HEK293 (cell line): ENCODE measurements at regions of chr18 and their contacts with region 1.

Region 1: DNA sequence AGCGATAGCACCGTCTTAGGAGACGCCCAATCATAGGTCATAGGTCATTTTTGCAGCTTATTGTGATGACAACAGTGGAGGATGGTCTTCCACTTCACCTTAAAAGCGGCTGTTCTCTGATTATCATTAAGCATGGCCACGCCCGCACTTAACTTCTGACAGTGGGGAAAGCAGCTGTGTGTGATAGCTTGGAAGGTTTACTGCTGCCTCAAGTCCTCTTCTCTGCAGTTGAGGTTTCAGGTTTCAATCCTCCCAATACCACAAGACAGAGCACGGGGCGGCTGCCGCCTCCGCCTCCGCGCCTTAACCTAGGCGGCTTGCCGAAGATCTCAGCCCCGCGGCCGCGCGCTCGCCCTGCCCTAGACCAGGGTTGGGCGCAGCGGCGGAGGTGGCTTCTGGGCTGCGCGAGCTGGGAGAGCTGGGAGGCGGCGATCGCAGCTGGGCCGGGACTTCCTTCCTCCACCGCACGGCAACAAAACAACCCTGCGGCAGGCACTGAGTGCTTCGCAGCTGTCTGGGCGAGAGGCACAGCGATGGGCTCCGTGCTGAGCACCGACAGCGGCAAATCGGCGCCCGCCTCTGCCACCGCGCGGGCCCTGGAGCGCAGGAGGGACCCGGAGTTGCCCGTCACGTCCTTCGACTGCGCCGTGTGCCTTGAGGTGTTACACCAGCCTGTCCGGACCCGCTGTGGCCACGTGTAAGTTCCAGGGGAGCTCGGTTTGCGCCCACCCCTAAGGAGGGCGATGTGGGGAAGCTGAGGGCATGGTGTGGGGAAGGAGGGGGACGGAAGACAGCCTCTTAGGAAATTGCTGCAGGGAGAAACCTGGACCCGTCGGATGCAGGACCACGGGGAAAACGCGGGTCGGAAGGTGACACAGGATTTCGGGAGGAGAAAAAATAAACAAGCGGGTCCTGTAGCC is at the start of gene RNF125:
- H3K4me3 ChIP-seq: peak within 1 kb of the TSS; percentile 57
- H3K27ac ChIP-seq: peak within 1 kb of the TSS; percentile 80
- H3K4me1 ChIP-seq: no peaks in the 10 kb centered on the region
- CTCF ChIP-seq: peak; percentile 61

Region 2: DNA sequence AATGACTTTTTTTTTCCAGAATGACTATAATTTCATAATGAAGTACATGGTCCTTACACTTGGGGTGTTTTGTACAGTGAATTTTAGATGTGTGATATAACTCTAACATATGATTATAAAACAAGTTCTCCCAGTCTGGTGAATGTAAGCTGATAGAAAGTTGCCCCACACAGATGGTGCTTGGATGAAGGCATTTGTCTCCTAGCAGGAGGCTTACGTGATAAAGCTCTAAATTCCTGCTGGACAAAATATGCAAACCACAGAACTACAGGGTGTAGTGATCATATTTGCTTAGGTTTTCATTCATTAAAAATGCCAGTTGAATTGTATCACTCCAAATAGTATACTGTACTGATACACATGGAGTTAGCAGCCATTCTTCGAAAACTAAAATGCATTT is 1061.5 kb before region 1 on chr18:
- CTCF ChIA-PET with region 1: no interaction called
- POLR2A ChIA-PET with region 1: interaction called, 10 read pairs
- H3K4me3 ChIP-seq: no peak overlapping the region
- H3K27ac ChIP-seq: no peak overlapping the region
- H3K4me1 ChIP-seq: no peaks in the 10 kb centered on the region
- CTCF ChIP-seq: no peak

Region 3: GRCh38 chr18:31942999-31943865 is 75.4 kb before region 1 on chr18 and contains the start of gene TRAPPC8:
- CTCF ChIA-PET with region 1: no interaction called
- POLR2A ChIA-PET with region 1: interaction called, 30 read pairs
- H3K4me3 ChIP-seq: peak within 1 kb of the TSS; percentile 89
- H3K27ac ChIP-seq: peak within 1 kb of the TSS; percentile 81
- H3K4me1 ChIP-seq: no peaks in the 10 kb centered on the region
- CTCF ChIP-seq: peak; percentile 48; the same call in 1 of the 2 replicates

Region 4: DNA sequence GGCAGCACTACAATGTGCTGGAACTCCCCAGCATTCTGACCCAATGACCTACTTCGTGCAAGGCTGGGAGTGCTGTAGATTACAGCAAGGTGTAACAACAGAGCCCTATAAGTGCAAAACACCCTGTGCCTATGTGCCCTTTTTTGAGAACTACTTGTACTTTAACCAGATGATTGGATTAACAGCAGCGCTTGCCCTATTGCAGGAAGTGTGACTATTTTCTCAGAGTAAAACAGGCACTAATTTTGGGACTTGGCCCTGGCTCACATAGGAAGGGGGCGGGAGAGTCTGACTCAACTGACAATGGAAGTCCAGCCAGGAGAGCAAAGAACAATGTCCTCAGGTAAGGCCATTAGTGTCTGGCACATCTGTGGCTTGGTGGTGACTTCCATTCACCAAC is 35.6 kb before region 1 on chr18:
- CTCF ChIA-PET with region 1: no interaction called
- POLR2A ChIA-PET with region 1: no interaction called
- H3K4me3 ChIP-seq: no peak overlapping the region
- H3K27ac ChIP-seq: no peak overlapping the region
- H3K4me1 ChIP-seq: no peaks in the 10 kb centered on the region
- CTCF ChIP-seq: no peak

Region 5: DNA sequence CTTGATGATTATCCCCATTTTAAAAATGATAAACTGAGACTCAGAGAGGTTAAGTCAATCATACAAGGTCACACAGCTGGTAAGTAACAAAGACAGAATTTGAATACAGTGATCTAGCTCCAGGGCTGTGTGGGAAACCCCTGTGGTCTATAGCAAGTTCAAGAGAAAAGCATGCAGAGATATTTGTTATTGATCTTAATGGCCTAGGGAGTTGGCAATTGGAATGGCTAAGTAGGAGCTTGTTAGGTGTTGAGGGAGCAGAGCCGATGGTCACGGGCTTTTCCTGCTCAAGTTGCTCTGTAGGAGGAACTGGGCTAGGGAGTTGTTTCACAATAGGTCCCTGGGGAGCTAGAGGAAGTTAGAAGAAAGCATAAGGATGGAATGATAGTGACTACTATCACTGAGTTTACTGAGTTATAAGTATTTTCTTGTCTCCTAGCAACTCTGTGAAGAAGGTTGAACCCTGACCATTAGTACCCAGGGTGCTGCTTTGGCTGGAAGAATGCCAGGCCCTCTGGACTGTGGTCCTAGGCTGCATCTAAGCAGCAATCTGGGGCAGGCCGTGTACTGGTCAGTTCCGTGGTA is 30.0 kb after region 1 on chr18:
- CTCF ChIA-PET with region 1: interaction called, 5 read pairs
- POLR2A ChIA-PET with region 1: interaction called, 18 read pairs
- H3K4me3 ChIP-seq: no peak overlapping the region
- H3K27ac ChIP-seq: no peak overlapping the region
- H3K4me1 ChIP-seq: peaks cover 6% of the 10 kb centered on the region
- CTCF ChIP-seq: no peak

Region 6: DNA sequence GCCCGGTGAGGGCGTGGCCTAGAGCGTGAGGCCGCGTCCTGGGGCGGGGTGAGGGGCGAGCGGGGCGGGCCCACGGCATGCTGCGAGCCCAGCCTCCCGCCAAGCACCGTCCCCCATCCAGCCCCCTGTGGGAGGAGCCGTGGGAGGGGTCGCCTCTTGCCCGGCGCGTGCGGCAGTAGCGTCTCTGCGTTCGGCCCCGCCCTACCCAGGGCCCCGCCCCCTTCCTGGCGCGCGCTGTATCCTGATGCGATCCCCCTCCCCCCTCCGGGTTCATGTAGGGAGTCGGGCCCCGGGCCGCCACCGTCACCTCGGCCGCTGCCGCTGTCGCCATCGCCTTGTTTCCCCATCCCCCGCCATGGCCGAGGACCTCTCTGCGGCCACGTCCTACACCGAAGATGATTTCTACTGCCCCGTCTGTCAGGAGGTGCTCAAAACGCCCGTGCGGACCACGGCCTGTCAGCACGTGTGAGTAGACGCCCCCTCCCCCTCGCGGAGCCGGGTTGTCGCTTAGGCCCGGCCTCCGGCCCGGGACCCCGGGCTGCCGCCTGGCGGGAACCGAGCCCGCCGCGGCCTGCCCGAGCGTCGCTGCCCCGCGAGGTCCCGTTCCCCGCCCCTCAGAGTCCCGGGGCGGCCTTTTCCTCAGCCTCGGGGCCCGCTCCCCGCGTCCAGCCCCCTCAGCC is 74.0 kb after region 1 on chr18:
- CTCF ChIA-PET with region 1: interaction called, 3 read pairs
- POLR2A ChIA-PET with region 1: interaction called, 20 read pairs
- H3K4me3 ChIP-seq: peak overlapping the region; percentile 90
- H3K27ac ChIP-seq: peak overlapping the region; percentile 97
- H3K4me1 ChIP-seq: peaks cover 4% of the 10 kb centered on the region; the same call in 1 of the 2 replicates
- CTCF ChIP-seq: no peak; the same call in 1 of the 2 replicates